ENCODE measurements at regions of chr17 and their contacts with region 1.

Region 1: GRCh38 chr17:21166595-21167210 is 39.9 kb downstream of the DHRS7B start:
- DNase-seq: no peak
- H3K4me3 ChIP-seq: peak overlapping the region in 1 of 4 donors; percentile 15
- H3K27ac ChIP-seq: peak overlapping the region; percentile 48 to 82 (median 81)
- H3K4me1 ChIP-seq: peaks cover 0 to 74% (median 57%) of the 10 kb centered on the region in 4 donors
- H3K27me3 ChIP-seq: no peaks in the 10 kb centered on the region
- CTCF ChIP-seq: no peak
- EP300 ChIP-seq: no peak
- POLR2A ChIP-seq: no peak

Region 2: GRCh38 chr17:21078016-21078780 is 88.5 kb before region 1 on chr17:
- intact Hi-C with region 1: loop called (anchors 5 kb)
- DNase-seq: no peak
- H3K4me3 ChIP-seq: no peak overlapping the region
- H3K27ac ChIP-seq: peak overlapping the region in 3 of 4 donors; percentile 39 to 85 (median 82)
- H3K4me1 ChIP-seq: peaks cover 0 to 49% (median 39%) of the 10 kb centered on the region in 4 donors
- H3K27me3 ChIP-seq: no peaks in the 10 kb centered on the region
- CTCF ChIP-seq: no peak
- EP300 ChIP-seq: no peak
- POLR2A ChIP-seq: no peak

Region 3: DNA sequence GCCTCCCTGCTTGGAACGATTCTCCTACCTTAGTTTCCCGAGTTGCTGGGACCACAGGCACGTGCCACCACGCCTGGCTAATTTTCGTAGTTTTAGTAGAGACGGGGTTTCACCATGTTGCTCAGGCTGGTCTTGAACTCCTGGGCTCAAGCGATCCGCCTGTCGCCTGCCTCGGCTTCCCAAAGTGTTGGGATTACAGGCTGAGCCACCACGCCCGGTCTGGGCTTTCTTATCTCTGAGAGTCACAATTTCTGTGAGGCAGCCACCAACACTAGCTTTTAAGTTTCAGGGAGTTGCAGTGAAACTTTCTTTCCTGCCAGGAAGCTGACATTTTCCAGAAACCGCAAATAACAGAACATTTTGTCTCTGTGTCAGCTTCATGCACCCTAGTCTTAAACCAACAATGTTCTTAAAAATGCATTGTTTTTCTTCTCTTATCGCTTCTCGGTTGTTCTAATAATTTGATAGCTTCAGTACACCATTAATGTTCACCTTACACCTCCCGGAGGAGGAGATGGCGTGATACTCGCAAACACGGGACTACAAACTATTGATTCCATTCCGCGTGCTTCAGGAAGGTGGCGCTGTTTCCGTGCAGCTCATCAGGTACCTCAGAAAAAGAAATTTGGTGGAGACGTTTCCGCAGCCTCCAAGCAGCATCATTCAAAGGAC is 47.3 kb before region 1 on chr17:
- intact Hi-C with region 1: no loop called
- DNase-seq: peak; percentile 86
- H3K4me3 ChIP-seq: peak overlapping the region in 3 of 4 donors; percentile 0 to 15 (median 7)
- H3K27ac ChIP-seq: peak overlapping the region in 3 of 4 donors; percentile 54 to 68 (median 56)
- H3K4me1 ChIP-seq: peaks cover 0 to 15% (median 9%) of the 10 kb centered on the region in 4 donors
- H3K27me3 ChIP-seq: no peaks in the 10 kb centered on the region
- CTCF ChIP-seq: peak; percentile 74 to 82 (median 78)
- EP300 ChIP-seq: no peak
- POLR2A ChIP-seq: no peak

Region 4: DNA sequence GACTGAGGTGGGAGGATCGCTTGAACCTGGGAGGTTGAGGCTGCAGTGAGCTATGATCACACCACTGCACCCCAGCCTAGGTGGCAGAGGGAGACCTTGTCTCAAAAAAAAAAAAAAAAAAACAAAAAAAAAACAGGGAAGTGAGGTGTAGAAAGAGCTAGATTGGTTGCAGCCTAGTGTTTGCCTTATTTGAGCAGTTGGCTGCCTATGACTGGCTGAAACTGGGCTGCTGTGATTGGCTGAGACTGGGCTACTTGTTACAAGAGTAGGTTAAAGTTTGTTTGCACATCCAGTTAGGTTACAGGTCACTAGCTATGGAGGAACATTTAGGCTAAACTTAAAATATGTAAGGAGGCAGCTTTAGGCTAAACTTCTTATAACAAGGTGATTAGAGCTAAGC is 34.3 kb before region 1 on chr17:
- intact Hi-C with region 1: loop called (anchors 5 kb)
- DNase-seq: no peak
- H3K4me3 ChIP-seq: no peak overlapping the region
- H3K27ac ChIP-seq: no peak overlapping the region
- H3K4me1 ChIP-seq: peaks cover 0 to 20% (median 12%) of the 10 kb centered on the region in 4 donors
- H3K27me3 ChIP-seq: no peaks in the 10 kb centered on the region
- CTCF ChIP-seq: no peak
- EP300 ChIP-seq: no peak
- POLR2A ChIP-seq: no peak